ENCODE measurements at regions of chr16 and their contacts with region 1.

Region 1: GRCh38 chr16:81723098-81723723 is 55.9 kb upstream of the PLCG2 start:
- DNase-seq: peak; percentile 47
- ATAC-seq: peak; percentile 75
- H3K4me3 Mint-ChIP-seq: no peak overlapping the region
- H3K27ac Mint-ChIP-seq: no peak overlapping the region
- H3K4me1 Mint-ChIP-seq: peaks cover 9% of the 10 kb centered on the region
- H3K27me3 Mint-ChIP-seq: no peaks in the 10 kb centered on the region
- CTCF ChIP-seq: peak; percentile 79

Region 2: GRCh38 chr16:81366316-81366932 is 356.8 kb before region 1 on chr16:
- CTCF ChIA-PET with region 1: interaction called, 20 read pairs
- POLR2A ChIA-PET with region 1: no interaction called
- intact Hi-C with region 1: loop called (anchors 10 kb)
- DNase-seq: peak; percentile 10
- ATAC-seq: peak; percentile 67
- H3K4me3 Mint-ChIP-seq: no peak overlapping the region
- H3K27ac Mint-ChIP-seq: no peak overlapping the region
- H3K4me1 Mint-ChIP-seq: no peaks in the 10 kb centered on the region
- H3K27me3 Mint-ChIP-seq: no peaks in the 10 kb centered on the region
- CTCF ChIP-seq: peak; percentile 80

Region 3: DNA sequence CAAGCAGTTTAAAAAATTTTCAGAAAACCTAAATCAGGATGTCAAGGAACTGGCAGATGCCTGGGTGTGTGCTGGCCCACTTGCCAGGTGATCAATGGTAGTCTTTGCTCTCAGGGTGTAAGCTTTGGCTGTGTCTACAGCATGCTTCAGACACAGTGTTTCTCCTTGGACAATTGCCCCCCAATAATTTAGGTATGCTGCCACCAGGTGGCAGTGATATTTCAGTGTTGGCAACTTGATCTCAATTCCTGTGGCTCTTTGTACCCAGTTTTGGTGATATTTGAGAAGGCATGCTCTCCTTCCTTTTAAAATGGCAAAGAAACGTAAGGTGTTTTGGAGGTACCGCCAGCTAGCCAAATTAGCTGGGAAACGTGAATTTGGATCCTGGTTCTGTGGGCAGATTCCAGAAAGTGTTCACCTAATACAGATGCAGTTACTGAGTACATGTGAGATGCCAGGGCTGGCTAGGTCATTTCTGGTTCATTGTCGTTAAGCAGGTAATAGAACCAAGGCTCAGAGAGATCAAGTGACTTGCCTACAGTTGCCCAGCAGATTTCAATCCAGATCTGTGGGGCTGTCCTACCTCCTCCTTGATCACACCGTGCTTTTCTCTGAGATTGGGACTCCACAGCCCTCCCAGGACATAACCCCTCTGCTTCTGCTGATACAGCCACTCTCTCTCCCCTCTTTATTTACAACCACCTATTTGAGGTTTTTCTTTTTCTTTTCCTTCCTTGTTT is 99.7 kb before region 1 on chr16:
- CTCF ChIA-PET with region 1: interaction called, 38 read pairs
- POLR2A ChIA-PET with region 1: interaction called, 3 read pairs
- intact Hi-C with region 1: loop called (anchors 1 kb)
- DNase-seq: peak; percentile 74
- ATAC-seq: no peak
- H3K4me3 Mint-ChIP-seq: no peak overlapping the region
- H3K27ac Mint-ChIP-seq: no peak overlapping the region
- H3K4me1 Mint-ChIP-seq: peaks cover 5% of the 10 kb centered on the region
- H3K27me3 Mint-ChIP-seq: no peaks in the 10 kb centered on the region
- CTCF ChIP-seq: peak; percentile 69

Region 4: DNA sequence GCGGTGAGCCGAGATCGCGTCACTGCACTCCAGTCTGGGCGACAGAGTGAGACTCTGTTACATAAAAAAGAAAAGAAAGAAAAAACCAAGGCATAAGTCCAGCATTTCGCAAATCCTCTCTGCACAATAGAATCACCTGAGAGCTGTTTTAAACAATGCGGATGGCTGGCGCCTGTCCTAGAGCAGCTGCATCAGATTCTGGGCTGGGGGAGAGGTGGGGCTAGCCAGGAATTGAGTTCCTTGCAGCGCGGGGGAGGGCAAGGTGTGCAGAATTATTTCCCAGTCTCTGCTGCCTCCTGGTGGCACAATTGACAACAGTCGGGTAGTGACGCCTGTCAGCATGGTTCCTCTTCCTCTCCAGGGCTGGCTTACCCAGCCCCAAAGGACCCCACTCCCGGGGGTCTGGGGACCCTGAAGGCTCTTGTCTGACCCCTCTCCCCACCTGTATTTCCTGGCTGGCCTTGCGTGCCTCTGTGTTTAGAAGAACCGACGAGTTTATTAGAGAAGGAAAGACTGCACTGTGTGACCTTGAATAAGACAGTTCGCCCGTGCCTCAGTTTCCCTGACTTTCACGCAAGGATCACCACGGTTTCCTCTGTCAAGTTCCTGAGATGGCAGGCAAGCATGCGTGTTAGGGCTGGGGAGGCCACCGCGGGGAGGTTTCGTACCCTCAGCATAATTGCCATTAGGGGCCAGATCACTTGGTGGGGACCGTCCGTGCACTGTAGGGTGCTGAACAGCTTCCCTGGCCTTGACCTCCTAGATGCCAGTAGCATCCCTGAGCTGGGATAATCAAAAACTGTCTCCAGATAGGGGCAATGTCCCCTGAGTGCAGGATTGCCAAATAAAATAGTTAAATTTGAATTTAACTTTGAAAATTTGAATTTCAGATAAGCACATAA is 14.9 kb after region 1 on chr16:
- CTCF ChIA-PET with region 1: interaction called, 13 read pairs
- POLR2A ChIA-PET with region 1: interaction called, 4 read pairs
- intact Hi-C with region 1: no loop called
- DNase-seq: peak; percentile 90
- ATAC-seq: peak; percentile 97
- H3K4me3 Mint-ChIP-seq: peak overlapping the region; percentile 34
- H3K27ac Mint-ChIP-seq: no peak overlapping the region
- H3K4me1 Mint-ChIP-seq: peaks cover 6% of the 10 kb centered on the region
- H3K27me3 Mint-ChIP-seq: peaks cover 1% of the 10 kb centered on the region
- CTCF ChIP-seq: peak; percentile 90

Measured in activated CD8-positive, alpha-beta T cell treated with anti-CD3 and anti-CD28 coated beads for 36 hours (primary cell).